ENCODE measurements at regions of chrX and their contacts with region 1.

Region 1: GRCh38 chrX:150772150-150772970 is 79.2 kb downstream of the MTMR1 start:
- DNase-seq: peak; percentile 73
- H3K4me3 ChIP-seq: no peak overlapping the region
- H3K27ac ChIP-seq: no peak overlapping the region
- H3K4me1 ChIP-seq: peaks cover 2% of the 10 kb centered on the region; the same call in 1 of the 2 replicates
- H3K27me3 ChIP-seq: no peaks in the 10 kb centered on the region

Region 2: DNA sequence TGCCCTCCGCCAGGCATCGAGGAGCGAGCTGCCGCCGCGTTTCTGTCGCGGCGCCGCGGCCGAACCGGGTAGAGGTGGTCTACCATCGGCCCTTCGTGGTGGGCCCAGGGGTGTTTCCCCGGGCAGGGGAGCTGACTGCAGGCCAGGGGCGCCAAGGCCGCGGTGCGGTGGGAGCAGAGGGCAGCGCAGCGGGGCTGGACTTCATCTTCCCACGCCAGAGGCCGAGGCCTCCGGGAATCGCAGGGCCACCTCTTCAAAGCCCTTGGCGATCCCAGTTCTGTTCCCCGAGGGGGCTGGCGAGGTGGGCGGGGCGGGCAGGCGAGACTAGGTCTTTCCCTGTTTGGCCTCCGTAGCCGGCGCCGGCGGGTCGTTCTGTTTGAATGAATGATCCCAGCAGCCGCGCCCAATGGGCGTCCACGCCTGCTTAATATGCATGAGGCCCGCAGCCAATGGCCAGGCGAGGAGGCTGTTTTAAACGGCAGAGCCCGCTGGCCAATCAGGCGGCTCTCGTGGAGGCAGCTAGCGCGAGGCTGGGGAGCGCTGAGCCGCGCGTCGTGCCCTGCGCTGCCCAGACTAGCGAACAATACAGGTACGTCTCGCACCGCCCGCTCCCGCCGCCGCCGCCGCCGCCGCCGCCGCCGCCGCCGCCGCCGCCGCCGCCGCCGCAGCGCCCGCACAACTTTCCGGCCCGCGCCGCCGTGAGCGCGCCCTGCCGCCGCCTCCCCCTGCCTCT is 210.6 kb after region 1 on chrX and contains the start of gene HMGB3:
- in situ Hi-C with region 1: loop called (anchors 25 kb)
- DNase-seq: peak; percentile 96
- H3K4me3 ChIP-seq: peak within 1 kb of the TSS; percentile 80
- H3K27ac ChIP-seq: peak within 1 kb of the TSS; percentile 49
- H3K4me1 ChIP-seq: no peaks in the 10 kb centered on the region
- H3K27me3 ChIP-seq: no peaks in the 10 kb centered on the region
- total RNA-seq, gene HMGB3: 6.5 and 12.1 TPM in 2 replicates

Region 3: GRCh38 chrX:151019856-151020255 is 247.5 kb after region 1 on chrX:
- in situ Hi-C with region 1: no loop called
- DNase-seq: peak; percentile 55
- H3K4me3 ChIP-seq: no peak overlapping the region
- H3K27ac ChIP-seq: no peak overlapping the region
- H3K4me1 ChIP-seq: no peaks in the 10 kb centered on the region
- H3K27me3 ChIP-seq: no peaks in the 10 kb centered on the region

Region 4: GRCh38 chrX:151082076-151082948 is 310.0 kb after region 1 on chrX:
- in situ Hi-C with region 1: loop called (anchors 10 kb)
- DNase-seq: peak; percentile 82
- H3K4me3 ChIP-seq: peak overlapping the region; percentile 53; the same call in 1 of the 2 replicates
- H3K27ac ChIP-seq: no peak overlapping the region
- H3K4me1 ChIP-seq: no peaks in the 10 kb centered on the region
- H3K27me3 ChIP-seq: no peaks in the 10 kb centered on the region

Measured in GM23248 (cell line).